Right ventricle myocardium inferior (tissue), 1 donor: ENCODE measurements at regions of chr17 and their contacts with region 1.

Region 1: GRCh38 chr17:49575579-49576087 is at the start of gene NXPH3:
- DNase-seq: peak; percentile 88
- ATAC-seq: peak; percentile 66
- total RNA-seq, gene NXPH3: 4.5 TPM

Region 2: GRCh38 chr17:49597928-49598655 is 22.5 kb after region 1 on chr17:
- intact Hi-C with region 1: no loop called
- DNase-seq: no peak
- ATAC-seq: no peak

Region 3: DNA sequence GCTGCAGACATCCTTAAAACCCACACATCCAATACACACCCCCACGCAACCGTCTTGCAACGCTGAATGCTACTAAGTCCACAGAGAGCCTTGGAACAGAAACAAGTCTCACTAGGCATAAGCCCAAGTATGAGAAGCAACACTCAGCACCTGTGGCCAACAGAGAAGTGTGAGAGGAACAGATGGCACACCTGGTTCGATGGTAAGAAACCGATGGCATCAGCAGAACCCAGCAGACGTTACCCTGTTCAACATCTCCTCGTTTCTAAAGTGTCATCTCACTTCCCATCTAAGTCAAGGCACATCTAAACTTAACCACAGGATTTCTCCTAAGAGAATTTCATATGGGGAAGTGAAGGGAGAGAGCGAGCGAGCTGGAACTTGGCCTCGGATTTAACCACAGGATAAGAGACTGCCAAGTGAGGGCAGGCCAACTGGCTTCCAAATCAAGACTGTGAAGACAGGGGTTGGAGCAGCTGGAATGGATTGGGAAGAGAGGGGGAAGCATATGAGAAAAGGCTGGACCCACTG is 41.0 kb after region 1 on chr17:
- intact Hi-C with region 1: loop called (anchors 5 kb)
- DNase-seq: peak; percentile 76
- ATAC-seq: peak; percentile 95

Region 4: DNA sequence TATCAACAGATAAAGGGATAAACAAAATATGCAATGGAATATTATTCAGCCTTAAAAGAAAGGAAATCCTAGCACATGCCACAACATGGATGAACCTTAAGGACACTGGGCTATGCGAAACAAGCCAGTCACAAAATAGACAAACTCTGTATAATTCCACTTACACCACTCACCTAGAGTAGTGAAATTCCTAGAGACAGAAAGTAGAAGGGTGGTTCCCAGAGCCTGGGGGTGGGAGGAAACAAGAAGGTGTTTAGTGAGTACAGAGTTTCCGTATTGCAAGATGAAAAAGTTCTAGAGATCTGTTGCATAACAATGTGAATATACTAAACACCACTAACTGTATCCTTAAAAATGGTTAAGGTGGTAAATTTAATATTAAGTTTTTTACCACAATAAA is 92.2 kb after region 1 on chr17:
- intact Hi-C with region 1: no loop called
- DNase-seq: no peak
- ATAC-seq: no peak

Region 5: DNA sequence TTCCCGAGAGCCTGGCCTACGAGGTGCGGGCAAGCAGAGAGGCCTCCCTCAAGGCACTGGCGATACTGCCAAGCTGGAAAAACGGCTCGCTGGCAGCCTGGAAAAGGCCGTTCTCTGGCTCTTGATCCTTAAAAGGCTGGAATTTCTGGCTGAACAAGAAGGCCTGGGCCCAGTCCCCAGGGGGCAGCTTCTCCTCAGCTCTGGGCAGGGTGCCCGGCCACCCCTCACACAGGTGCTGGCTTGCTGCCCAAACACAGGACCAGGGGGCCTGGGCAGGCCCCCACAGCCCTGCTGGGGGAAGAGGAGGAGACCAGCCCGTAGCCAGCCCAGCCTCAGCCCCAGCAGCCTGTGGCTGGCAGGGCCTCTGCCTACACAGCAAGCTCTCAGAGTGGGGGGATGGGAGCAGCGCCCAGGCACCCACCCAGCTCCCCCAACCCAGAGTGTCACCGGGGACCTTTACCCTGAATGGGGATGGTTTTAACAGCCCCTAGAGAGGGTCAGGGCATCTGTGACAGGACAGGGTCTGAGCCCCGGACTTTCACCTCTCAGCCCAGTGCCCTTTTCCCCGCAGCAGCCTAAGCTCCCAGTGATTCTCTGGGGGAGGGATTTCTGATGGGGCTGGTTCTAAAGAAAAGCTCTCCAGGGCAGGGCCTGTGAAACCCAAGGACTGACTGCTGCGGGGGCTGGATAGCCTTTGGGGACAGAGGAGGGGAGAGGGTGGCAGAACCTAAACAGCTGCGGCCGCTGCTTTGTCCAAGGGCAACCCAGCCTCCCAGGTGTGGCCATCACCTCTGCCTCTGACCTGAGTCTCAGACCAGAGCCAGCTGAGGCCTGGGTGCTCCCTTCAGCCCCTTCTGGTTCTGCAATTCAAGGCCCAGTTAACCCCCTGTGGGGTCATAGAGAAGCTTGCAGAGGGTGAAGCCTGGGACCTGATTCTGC is 1329.2 kb after region 1 on chr17:
- intact Hi-C with region 1: no loop called
- DNase-seq: peak; percentile 84
- ATAC-seq: peak; percentile 60